Activated naive CD4-positive, alpha-beta T cell treated with anti-CD3 and anti-CD28 coated beads for 36 hours (primary cell): ENCODE measurements at regions of chr6 and their contacts with region 1.

Region 1: GRCh38 chr6:31042806-31043205 is 32.5 kb downstream of the MUC22 start:
- DNase-seq: peak; percentile 46
- H3K4me3 Mint-ChIP-seq: no peak overlapping the region
- H3K27ac Mint-ChIP-seq: no peak overlapping the region
- H3K4me1 Mint-ChIP-seq: peaks cover 3% of the 10 kb centered on the region
- H3K27me3 Mint-ChIP-seq: peaks cover 9% of the 10 kb centered on the region

Region 2: GRCh38 chr6:30942338-30943060 is 100.3 kb before region 1 on chr6:
- CTCF ChIA-PET with region 1: no interaction called
- intact Hi-C with region 1: loop called (anchors 5 kb)
- DNase-seq: peak; percentile 34
- H3K4me3 Mint-ChIP-seq: no peak overlapping the region
- H3K27ac Mint-ChIP-seq: no peak overlapping the region
- H3K4me1 Mint-ChIP-seq: peaks cover 2% of the 10 kb centered on the region
- H3K27me3 Mint-ChIP-seq: peaks cover 35% of the 10 kb centered on the region